Gastrocnemius medialis (tissue), 4 donors: ENCODE measurements at regions of chr13 and their contacts with region 1.

Region 1: GRCh38 chr13:49495783-49496762 is at the start of gene PHF11:
- DNase-seq: peak; percentile 57 to 84
- ATAC-seq: peak; percentile 79 to 87
- H3K4me3 ChIP-seq: peak within 1 kb of the TSS; percentile 65 to 85 (median 82)
- H3K27ac ChIP-seq: peak within 1 kb of the TSS; percentile 87 to 96 (median 88)
- H3K4me1 ChIP-seq: no peaks in the 10 kb centered on the region
- H3K27me3 ChIP-seq: no peaks in the 10 kb centered on the region
- CTCF ChIP-seq: peak in 2 of 5 experiments; percentile 29 to 47
- POLR2A ChIP-seq: peak; percentile 26 to 34
- total RNA-seq, gene PHF11: 6.5 to 17.7 (median 13.8) TPM

Region 2: GRCh38 chr13:49098771-49099512 is 397.1 kb before region 1 on chr13:
- in situ Hi-C with region 1: no loop called
- intact Hi-C with region 1: loop called (anchors 10 kb)
- DNase-seq: no peak
- ATAC-seq: peak; percentile 28 to 55
- H3K4me3 ChIP-seq: no peak overlapping the region
- H3K27ac ChIP-seq: peak overlapping the region; percentile 58 to 85 (median 76)
- H3K4me1 ChIP-seq: peaks cover 22 to 23% of the 10 kb centered on the region in 2 donors
- H3K27me3 ChIP-seq: no peaks in the 10 kb centered on the region
- CTCF ChIP-seq: peak in 3 of 5 experiments; percentile 20 to 70 (median 36)
- POLR2A ChIP-seq: no peak

Region 3: GRCh38 chr13:49308089-49308875 is 187.8 kb before region 1 on chr13:
- in situ Hi-C with region 1: no loop called
- intact Hi-C with region 1: loop called (anchors 5 kb)
- DNase-seq: peak; percentile 80 to 85
- ATAC-seq: peak; percentile 93 to 96
- H3K4me3 ChIP-seq: peak overlapping the region in 1 of 4 donors; percentile 27
- H3K27ac ChIP-seq: peak overlapping the region; percentile 64 to 74 (median 70)
- H3K4me1 ChIP-seq: peaks cover 20 to 24% of the 10 kb centered on the region in 2 donors
- H3K27me3 ChIP-seq: no peaks in the 10 kb centered on the region
- CTCF ChIP-seq: no peak
- POLR2A ChIP-seq: peak in 1 of 2 donors; percentile 26

Region 4: DNA sequence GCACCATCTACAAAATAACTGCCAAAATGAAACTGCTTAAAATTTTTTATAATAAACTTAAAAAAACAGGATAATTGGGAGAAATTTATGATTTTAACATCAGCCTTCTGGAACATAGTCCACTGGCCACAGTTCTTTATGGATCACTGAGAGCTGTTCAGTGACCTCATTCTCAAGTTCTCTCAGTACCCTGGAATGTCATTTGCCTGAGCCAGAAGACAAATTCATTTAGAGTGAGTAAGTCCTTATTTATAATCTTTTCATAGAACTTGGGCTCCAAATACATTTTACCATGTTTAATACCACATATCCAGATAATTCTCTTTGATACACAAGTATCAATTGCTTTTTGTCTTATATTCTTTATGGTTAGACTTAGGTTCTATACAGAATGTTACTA is 139.8 kb before region 1 on chr13:
- in situ Hi-C with region 1: no loop called
- intact Hi-C with region 1: no loop called
- DNase-seq: no peak
- ATAC-seq: peak; percentile 92 to 97
- H3K4me3 ChIP-seq: no peak overlapping the region
- H3K27ac ChIP-seq: peak overlapping the region; percentile 57 to 59 (median 58)
- H3K4me1 ChIP-seq: peaks cover 0 to 11% of the 10 kb centered on the region in 2 donors
- H3K27me3 ChIP-seq: no peaks in the 10 kb centered on the region
- CTCF ChIP-seq: no peak
- POLR2A ChIP-seq: no peak

Region 5: DNA sequence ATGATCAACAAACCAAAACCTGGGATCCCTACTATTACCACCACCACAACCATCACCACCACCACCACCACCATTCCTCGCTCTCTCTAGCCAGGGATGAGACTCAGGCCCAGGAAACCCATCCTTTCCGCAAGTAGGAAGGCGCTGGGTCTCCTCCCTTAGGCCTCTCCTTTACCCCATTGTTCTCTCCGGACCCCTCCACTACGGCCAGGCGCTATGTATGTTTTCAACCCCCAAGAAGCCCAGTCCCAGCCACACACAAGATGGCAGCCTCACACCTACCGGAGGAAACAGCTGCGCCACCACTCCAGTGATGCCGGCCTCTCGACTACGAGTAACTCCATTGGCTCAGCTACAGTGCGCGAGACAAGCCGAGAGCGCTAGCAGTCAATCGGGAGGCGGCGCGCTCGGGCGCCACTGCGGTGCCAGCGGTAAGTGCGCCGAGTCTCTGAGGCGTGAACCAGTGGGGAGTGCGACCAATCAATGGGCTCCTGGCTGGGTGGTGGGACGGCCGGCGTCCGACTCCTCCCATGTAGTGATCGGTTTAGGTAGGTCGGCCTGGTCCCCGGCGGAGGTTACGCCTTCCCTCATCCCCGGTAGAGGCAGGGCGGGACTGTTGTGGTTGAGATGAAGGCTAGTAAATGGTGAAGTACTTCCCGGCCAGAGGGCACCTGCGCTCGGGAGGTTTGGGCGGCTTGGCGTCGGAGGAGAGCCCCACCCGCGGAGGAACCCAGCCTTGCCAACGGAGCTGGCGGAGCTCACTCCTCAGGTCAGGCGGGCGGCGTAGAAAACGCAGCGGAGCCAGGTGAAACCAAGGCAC is 52.2 kb before region 1 on chr13 and contains the starts of genes CAB39L and SETDB2:
- in situ Hi-C with region 1: no loop called
- intact Hi-C with region 1: loop called (anchors 2 kb)
- DNase-seq: peak; percentile 98
- ATAC-seq: peak; percentile 91 to 94
- H3K4me3 ChIP-seq: peak within 1 kb of the TSS; percentile 77 to 83 (median 81)
- H3K27ac ChIP-seq: peak within 1 kb of the TSS; percentile 84 to 93 (median 87)
- H3K4me1 ChIP-seq: peaks cover 9 to 20% of the 10 kb centered on the region in 2 donors
- H3K27me3 ChIP-seq: no peaks in the 10 kb centered on the region
- CTCF ChIP-seq: peak in 3 of 5 experiments; percentile 27 to 52 (median 46)
- POLR2A ChIP-seq: peak; percentile 58 to 89
- total RNA-seq, gene CAB39L: 4.7 to 14.4 (median 8.7) TPM
- total RNA-seq, gene SETDB2: 1.7 to 6.2 (median 4.6) TPM

Region 6: DNA sequence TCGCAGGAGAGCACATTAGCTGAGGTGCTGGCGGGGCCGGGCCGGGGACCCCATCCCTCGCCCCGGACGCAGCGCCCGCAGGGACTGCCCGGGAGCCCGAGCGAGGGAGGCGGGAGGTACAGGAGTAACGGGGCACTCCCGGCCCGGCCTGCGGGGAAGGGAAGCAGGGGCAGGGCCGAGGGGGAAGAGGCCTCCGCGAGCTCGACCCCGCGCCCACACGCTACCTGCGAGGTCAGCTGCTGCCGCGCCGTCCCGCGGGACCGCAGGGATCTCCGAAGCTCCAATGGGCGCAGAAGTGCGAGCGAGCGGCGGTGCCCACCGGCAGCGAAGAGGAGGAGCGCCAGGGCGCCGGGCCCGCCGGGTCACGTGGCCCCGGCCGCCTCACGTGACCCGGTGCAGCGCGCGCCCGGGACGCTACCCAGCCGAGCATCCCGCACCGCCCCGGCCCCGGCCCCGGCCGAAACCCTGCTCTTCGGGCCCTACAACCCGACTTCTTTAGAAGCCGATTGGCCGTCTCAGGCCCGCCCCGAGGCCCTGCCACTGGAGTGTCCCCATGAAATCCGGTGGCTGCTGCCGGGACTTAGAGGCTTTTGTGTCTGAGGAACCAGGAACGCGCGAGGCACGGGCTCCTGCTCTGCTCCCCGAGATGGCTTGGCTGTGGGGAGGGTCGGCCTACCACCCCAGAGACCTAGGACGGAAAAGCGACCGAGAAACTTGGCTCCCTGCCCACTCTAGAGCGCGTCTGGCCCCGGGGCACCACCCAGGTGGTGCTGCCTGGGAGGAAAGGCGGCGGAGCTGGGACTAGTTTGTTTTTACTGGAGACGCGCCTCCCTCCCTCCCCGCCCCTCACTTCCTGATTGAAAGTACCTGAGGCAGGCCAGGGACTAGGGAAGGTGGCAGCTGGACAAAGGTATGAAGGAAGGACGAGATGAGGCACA is 89.4 kb after region 1 on chr13 and contains the start of gene RCBTB1:
- in situ Hi-C with region 1: no loop called
- intact Hi-C with region 1: loop called (anchors 2 kb)
- DNase-seq: peak; percentile 8 to 41
- ATAC-seq: peak; percentile 94 to 96
- H3K4me3 ChIP-seq: peak within 1 kb of the TSS; percentile 74 to 95 (median 92)
- H3K27ac ChIP-seq: peak within 1 kb of the TSS; percentile 61 to 77 (median 72)
- H3K4me1 ChIP-seq: peaks cover 7 to 8% of the 10 kb centered on the region in 2 donors
- H3K27me3 ChIP-seq: no peaks in the 10 kb centered on the region
- CTCF ChIP-seq: peak in 1 of 5 experiments; percentile 18
- POLR2A ChIP-seq: peak in 1 of 2 donors; percentile 29
- total RNA-seq, gene RCBTB1: 5.3 to 14.4 (median 5.7) TPM

Region 7: GRCh38 chr13:49606747-49607648 is 110.9 kb after region 1 on chr13:
- in situ Hi-C with region 1: no loop called
- intact Hi-C with region 1: loop called (anchors 5 kb)
- DNase-seq: peak; percentile 62 to 79
- ATAC-seq: peak; percentile 97 to 99
- H3K4me3 ChIP-seq: peak overlapping the region; percentile 10 to 55 (median 28)
- H3K27ac ChIP-seq: no peak overlapping the region
- H3K4me1 ChIP-seq: no peaks in the 10 kb centered on the region
- H3K27me3 ChIP-seq: no peaks in the 10 kb centered on the region
- CTCF ChIP-seq: peak; percentile 59 to 79 (median 71)
- POLR2A ChIP-seq: no peak